ENCODE measurements at regions of chr9 and their contacts with region 1.

Region 1: DNA sequence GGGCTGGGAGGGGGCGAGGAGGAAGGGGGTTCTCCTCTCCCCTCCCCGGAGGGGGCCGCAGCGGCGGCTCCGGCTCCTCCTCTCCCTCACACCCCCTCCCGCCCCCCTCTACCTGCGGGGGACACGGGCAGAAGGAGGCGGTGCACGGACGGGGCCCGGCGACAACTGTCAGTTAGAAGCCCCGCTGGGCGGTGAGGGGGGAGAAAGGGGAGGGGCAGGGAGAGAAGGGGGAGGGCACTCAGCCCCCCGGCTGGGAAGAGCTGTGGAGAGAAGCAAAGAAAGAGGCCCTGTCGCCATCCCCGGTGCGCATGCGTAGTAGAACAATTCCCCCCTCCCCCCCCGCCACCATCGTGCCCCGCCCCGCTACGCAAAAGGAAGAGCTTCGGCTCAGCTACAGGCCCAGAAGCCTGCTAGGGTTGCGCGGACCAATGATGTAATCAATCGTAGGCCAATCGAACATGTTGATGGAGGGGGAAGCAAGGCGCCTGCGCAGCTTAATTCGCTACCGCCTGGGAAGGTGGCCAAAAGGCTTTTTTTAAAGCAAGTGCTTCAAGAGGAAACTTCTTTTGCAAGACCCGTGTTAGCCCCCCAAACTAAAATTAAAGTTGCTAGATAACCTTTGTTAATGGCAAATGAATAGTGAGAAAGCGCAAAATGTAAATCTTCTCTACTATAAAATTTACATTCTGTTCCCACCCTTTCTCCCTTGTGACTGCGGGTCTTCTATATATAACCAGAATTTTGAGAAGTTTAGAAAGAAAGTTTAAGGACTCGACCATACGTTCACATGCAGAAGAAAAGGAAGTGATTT is 7.0 kb downstream of the RANBP6 start:
- DNase-seq: peak; percentile 97
- H3K4me3 Mint-ChIP-seq: peak overlapping the region; percentile 74
- H3K27ac Mint-ChIP-seq: peak overlapping the region; percentile 79
- H3K4me1 Mint-ChIP-seq: peaks cover 56% of the 10 kb centered on the region
- H3K27me3 Mint-ChIP-seq: no peaks in the 10 kb centered on the region

Region 2: GRCh38 chr9:4792572-4793458 is 1215.6 kb before region 1 on chr9 and contains the start of gene RCL1:
- CTCF ChIA-PET with region 1: no interaction called
- POLR2A ChIA-PET with region 1: no interaction called
- intact Hi-C with region 1: loop called (anchors 5 kb)
- DNase-seq: peak; percentile 98
- H3K4me3 Mint-ChIP-seq: peak within 1 kb of the TSS; percentile 93
- H3K27ac Mint-ChIP-seq: peak within 1 kb of the TSS; percentile 86
- H3K4me1 Mint-ChIP-seq: peaks cover 49% of the 10 kb centered on the region
- H3K27me3 Mint-ChIP-seq: no peaks in the 10 kb centered on the region
- total RNA-seq, gene RCL1: 26.0 to 28.2 TPM

Region 3: GRCh38 chr9:5843794-5844504 is 164.4 kb before region 1 on chr9:
- CTCF ChIA-PET with region 1: no interaction called
- POLR2A ChIA-PET with region 1: no interaction called
- intact Hi-C with region 1: loop called (anchors 5 kb)
- DNase-seq: no peak
- H3K4me3 Mint-ChIP-seq: peak overlapping the region; percentile 46
- H3K27ac Mint-ChIP-seq: peak overlapping the region; percentile 82
- H3K4me1 Mint-ChIP-seq: peaks cover 63% of the 10 kb centered on the region
- H3K27me3 Mint-ChIP-seq: no peaks in the 10 kb centered on the region

Region 4: GRCh38 chr9:6024020-6024554 is 15.7 kb after region 1 on chr9:
- CTCF ChIA-PET with region 1: interaction called, 24 read pairs
- POLR2A ChIA-PET with region 1: interaction called, 4 read pairs
- intact Hi-C with region 1: no loop called
- DNase-seq: peak; percentile 36
- H3K4me3 Mint-ChIP-seq: peak overlapping the region; percentile 23
- H3K27ac Mint-ChIP-seq: no peak overlapping the region
- H3K4me1 Mint-ChIP-seq: peaks cover 4% of the 10 kb centered on the region
- H3K27me3 Mint-ChIP-seq: peaks cover 5% of the 10 kb centered on the region

Region 5: DNA sequence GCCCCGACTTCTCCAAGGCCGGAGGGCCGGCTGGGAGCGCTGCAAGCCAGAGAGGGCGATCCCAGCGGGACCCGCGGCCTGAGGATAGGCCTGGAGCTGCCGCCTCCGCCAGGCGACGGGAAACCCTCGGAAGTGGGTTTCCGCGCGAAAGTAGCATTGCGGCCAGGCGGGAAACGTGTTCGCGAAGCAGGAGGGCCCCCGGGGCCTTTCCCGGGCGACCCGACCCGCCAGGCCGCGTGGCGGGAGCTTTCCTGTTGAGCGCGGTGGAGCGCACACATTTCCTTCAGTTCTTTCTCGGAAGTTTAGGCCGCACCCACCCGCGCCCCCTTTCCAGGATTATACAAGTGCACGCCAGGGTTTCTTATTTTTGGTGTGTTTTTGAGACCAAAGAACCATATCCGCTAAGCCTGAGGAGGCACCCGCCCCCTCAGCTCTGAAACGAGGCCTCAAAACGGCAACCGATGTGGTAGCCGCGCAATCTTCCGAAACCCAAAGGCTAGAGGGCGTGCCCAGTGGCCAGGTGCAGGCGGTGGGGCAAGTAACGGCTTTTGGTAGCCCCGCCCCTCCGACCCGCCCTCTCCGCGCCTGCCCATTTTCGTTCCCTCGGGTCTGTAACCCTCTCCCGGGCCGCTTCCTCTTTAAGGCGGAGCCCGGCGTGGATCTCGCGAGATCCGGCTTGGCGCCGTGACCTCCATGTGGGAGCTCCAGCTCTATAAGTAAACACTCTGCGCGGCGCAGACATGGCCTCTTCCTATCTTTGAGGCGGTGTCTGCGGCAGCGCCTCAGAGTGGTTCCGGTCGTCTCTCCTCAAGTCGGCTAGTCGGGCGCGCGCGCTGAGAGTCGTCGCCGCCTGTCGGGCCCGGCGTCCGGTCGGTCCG is 404.4 kb after region 1 on chr9 and contains the start of gene UHRF2:
- CTCF ChIA-PET with region 1: no interaction called
- POLR2A ChIA-PET with region 1: interaction called, 6 read pairs
- intact Hi-C with region 1: loop called (anchors 2 kb)
- DNase-seq: peak; percentile 100
- H3K4me3 Mint-ChIP-seq: peak within 1 kb of the TSS; percentile 80
- H3K27ac Mint-ChIP-seq: peak within 1 kb of the TSS; percentile 94
- H3K4me1 Mint-ChIP-seq: peaks cover 26% of the 10 kb centered on the region
- H3K27me3 Mint-ChIP-seq: no peaks in the 10 kb centered on the region
- total RNA-seq, gene UHRF2: 59.5 to 62.9 TPM